ENCODE measurements at regions of chr5 and their contacts with region 1.

Region 1: GRCh38 chr5:177446200-177447065 is at the start of gene PRR7:
- DNase-seq: peak; percentile 70
- total RNA-seq, gene PRR7: 19.5 and 30.8 TPM in 2 replicates

Region 2: DNA sequence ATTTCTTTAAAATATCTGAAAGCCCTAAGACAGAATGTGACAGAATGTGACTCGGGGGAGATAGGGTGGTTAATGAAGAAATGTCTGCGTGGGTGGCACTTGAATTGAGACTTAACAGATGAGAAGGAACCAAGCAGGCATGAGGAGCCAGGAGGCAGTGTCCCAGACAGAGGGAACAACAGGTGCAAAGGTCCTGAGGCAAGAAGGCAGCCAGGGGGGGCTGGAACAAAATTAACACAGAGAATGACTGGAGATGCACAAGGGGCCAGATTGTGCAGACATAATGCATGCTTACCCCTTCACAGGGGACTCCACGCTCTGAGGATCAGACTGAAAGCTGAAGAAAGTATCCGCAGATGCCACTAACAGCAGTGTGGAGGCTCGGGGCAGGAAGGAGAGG is 96.7 kb before region 1 on chr5:
- in situ Hi-C with region 1: loop called (anchors 10 kb)
- DNase-seq: no peak

Region 3: GRCh38 chr5:177393206-177393765 is 53.1 kb before region 1 on chr5:
- in situ Hi-C with region 1: no loop called
- DNase-seq: no peak

Region 4: DNA sequence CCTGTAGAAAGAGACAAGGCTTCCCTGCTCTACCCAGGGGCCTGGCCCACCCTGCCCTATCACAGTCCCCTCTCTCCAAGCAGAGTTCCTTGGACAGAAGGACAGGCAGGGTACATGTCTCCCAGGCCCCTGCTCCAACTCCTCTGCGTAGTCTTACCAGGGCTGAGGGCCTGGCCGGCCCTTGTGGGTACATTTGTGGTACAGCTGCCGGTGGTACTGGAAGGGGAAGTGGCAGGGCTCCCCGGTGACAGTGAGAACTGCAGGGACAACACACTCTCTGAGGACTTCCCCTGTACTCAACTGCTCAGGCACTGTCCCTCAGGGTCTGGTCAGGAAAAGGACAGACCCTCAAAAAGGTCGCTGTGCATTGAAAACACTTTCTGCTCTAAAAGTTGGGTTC is 40.6 kb before region 1 on chr5:
- in situ Hi-C with region 1: loop called (anchors 5 kb)
- DNase-seq: no peak

Measured in G401 (cell line).